Activated CD4-positive, alpha-beta T cell treated with anti-CD3 and anti-CD28 coated beads for 36 hours (primary cell): ENCODE measurements at regions of chr16 and their contacts with region 1.

Region 1: DNA sequence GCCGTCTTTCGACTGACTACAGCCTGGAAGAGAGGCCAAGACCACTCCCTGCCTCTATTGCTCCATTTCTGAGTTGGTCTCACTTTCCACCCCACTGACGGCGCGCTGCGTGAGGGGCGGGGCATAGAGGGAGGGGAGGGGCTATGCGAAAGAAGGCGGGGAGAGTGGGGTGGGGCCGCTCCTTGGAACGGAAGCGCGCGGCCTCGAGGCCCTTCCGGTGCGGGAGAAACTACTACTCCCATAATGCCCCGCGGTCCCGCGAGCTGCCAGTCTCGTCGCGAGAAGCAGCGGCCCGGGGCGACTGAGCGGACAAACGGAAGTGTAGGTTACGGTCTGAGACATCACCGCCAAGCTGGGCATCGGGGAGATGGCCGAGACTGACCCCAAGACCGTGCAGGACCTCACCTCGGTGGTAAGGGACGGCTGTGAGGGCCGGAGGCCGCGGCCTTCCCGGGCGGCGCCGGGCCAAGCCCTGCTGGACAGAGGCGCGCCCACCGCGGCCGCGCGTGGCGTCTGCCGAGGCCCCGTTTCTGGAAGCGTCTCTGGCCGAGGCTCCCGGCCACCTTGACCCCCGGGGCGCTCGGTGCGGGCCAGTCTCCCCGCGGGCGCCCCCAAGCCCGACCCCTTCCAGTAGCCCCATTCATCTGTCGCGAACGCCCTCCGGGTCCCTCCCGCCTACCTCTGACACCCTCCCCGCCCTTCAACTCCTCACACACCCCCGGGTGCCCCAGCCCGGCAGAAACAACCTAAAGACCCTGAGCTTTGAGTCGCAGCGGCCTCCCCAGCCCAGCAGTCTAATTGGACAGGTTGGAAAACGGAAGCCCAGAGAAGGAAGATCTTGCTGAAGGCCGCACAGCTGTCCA is at the start of gene HSBP1:
- DNase-seq: peak; percentile 97
- ATAC-seq: peak; percentile 98
- H3K4me3 Mint-ChIP-seq: peak within 1 kb of the TSS; percentile 98
- H3K27ac Mint-ChIP-seq: peak within 1 kb of the TSS; percentile 93
- H3K4me1 Mint-ChIP-seq: peaks cover 31% of the 10 kb centered on the region
- H3K27me3 Mint-ChIP-seq: peaks cover under 1% of the 10 kb centered on the region
- total RNA-seq, gene HSBP1: 73.1 to 80.7 TPM

Region 2: DNA sequence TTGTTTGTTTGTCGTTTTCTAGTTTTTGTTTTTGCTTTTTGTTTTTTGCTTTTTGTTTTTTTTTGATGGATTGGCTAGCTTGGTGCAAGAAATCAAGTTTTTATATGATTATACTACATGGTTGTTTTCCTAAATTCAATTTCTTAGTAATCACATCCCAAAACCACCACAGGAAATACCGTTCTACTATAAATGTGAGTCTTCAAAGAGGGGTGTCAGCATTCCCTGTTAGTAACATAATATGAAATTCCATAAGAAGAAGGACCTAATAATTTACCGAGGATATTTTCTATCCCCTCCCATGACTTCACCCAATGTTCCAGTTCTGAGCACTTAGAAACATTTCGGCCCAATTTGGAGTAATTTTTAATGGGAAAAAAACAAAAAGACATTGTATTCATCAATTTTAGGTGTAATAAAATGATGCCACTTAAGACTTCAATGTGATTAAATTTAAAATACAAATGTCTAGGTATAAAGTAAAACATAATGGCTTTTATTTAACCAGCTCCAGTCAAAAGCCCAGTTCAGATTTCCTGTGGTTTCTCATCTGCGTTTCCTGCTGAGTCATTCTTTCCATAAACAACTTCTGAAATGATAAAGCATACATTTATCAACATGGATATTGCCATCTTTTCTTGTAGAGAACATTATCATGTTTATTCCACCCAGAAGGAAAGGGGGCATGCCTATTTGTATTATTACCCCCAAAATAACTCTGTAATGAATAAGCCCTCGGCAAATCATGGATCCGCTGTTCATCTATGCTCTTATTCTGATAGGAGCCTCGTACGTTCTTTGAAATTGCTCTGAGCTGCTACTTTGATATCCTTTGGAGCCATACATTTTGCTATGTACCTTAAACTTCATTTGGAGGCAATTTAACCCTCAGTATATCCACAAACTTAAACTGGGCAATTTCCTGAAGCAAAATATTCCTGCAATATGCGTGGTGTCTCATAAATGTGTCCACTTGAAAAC is 27.9 kb after region 1 on chr16:
- CTCF ChIA-PET with region 1: no interaction called
- POLR2A ChIA-PET with region 1: no interaction called
- intact Hi-C with region 1: loop called in 1 of 2 experiments (anchors 2 kb)
- DNase-seq: no peak
- ATAC-seq: peak; percentile 60
- H3K4me3 Mint-ChIP-seq: no peak overlapping the region
- H3K27ac Mint-ChIP-seq: no peak overlapping the region
- H3K4me1 Mint-ChIP-seq: peaks cover 13% of the 10 kb centered on the region
- H3K27me3 Mint-ChIP-seq: peaks cover 7% of the 10 kb centered on the region

Region 3: GRCh38 chr16:84013787-84014569 is 206.0 kb after region 1 on chr16:
- CTCF ChIA-PET with region 1: no interaction called
- POLR2A ChIA-PET with region 1: no interaction called
- intact Hi-C with region 1: loop called in 1 of 2 experiments (anchors 1 kb)
- DNase-seq: peak; percentile 91
- ATAC-seq: peak; percentile 90
- H3K4me3 Mint-ChIP-seq: no peak overlapping the region
- H3K27ac Mint-ChIP-seq: no peak overlapping the region
- H3K4me1 Mint-ChIP-seq: peaks cover 9% of the 10 kb centered on the region
- H3K27me3 Mint-ChIP-seq: no peaks in the 10 kb centered on the region

Region 4: DNA sequence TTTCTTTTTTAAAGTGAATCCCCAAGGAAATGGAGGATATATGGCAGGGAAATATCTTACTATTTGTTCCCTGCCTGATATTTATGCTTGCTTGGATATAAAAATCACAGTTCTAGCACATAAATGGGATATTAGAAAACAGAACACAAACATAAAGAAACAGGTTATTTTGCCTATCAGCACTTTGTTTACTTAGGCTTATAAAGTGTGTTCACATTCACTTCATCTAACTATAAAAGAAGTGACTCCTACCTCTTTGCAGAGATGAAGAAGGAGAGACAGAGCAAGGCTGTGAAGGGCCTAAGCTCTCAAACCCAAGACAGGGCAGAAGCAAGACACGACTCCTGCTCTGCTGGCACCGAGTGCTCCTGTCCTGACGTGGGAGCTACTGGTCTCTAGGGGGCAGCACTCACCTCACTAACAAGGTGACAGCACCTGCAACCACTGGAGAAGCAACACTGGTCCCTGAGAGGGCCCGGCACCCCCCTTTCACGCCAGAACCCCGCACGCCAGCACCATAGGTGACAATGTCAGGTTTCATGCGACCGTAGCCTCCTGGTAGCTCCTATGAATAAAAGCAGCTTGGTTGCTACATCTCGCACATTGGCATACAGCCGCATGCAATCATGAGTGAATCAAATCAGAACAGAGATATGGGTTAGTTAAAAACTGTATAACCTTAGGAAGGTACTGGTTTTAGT is 276.8 kb after region 1 on chr16:
- CTCF ChIA-PET with region 1: no interaction called
- POLR2A ChIA-PET with region 1: no interaction called
- intact Hi-C with region 1: no loop called
- DNase-seq: peak; percentile 83
- ATAC-seq: peak; percentile 79
- H3K4me3 Mint-ChIP-seq: no peak overlapping the region
- H3K27ac Mint-ChIP-seq: no peak overlapping the region
- H3K4me1 Mint-ChIP-seq: peaks cover 40% of the 10 kb centered on the region
- H3K27me3 Mint-ChIP-seq: no peaks in the 10 kb centered on the region